PC-3 (cell line): ENCODE measurements at regions of chr15 and their contacts with region 1.

Region 1: DNA sequence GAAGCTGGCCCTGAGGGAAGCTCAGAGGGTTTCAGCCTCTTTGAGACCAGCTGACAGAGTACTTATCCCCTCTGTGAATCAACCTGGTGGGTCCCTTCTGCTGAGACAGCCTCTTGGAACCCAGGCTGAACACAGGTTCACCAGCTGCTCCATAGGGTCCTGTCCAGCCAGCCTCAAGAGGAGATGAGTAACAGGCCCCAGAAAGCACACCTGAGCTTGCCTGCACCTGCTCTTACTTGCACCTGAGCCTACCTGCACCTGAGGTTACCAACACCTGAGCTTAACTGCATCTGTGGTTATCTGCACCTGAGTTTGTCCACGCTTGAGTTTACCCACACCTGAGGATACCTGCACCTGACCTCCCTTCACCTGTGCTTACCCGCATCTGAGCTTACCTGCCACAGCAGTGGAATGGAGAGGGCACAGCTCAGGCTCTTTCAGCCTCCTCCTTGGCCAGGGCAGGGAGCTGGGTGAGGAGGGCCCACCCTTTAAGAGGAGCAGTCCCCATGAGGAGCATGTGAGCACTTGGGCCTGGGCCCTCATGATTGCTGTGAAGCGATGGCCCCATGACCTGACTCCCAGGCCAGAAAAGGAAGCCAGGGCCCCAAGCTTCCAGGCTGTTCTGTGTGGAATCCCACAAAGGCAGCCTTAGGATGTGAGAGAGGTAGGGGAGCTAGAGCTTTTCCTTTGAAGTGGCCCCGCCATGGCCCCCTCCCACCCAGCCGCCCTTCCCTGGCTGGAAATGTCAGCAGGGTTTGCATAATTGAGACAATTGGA is at the start of gene TRPM1:
- DNase-seq: no peak
- ATAC-seq: no peak
- H3K4me3 ChIP-seq: no peak within 1 kb of the TSS
- H3K27ac ChIP-seq: no peak within 1 kb of the TSS
- H3K4me1 ChIP-seq: peaks cover 6% of the 10 kb centered on the region
- H3K27me3 ChIP-seq: peaks cover 20% of the 10 kb centered on the region
- CTCF ChIP-seq: no peak
- total RNA-seq, gene TRPM1: not detected in 2 replicates

Region 2: DNA sequence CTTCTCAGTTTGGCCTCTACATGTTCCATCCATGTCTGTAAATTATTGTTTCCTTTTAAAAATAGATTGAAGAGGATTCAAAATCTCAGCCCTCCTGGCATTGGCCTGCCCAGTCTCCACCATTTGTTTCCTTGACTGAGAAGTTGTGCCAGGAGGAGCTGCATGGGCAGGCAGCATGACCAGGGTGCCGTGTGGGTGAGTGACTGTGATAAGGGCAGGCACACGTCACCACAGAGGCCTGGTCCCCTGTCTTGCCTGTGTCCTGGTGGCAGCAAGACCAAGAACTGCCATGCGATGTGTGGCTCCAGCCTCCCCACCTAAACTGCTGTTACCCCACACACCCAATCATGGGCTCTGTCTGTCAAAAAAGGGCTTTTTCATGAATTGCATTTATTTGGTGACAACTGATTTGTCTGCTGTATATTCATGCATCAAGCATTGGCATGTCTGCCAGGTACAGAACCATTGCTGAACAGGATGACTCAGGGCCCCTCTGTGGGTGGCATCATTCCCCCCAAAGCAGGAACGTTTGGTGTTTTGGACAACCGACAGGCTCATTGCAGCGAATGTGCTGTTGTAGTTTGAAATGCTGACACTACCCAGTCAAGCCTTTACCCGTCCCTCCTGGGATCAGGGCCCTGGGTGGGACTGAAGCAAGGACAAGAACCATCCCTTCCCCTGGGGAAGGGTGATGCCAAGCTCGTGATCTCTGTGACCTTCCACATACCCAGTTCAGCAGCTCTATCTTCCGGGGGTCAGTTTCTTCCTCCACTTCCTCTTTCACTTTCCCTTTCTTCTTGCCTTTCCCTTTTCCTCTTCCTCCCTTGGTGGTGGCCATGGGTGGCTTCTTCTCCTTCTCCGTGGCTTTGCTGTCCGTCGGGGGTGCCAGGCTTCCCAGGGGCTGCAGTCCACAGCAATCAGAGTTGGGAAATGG is 51.5 kb before region 1 on chr15:
- CTCF ChIA-PET with region 1: no interaction called
- POLR2A ChIA-PET with region 1: no interaction called
- intact Hi-C with region 1: loop called (anchors 10 kb)
- DNase-seq: no peak
- ATAC-seq: no peak
- H3K4me3 ChIP-seq: no peak overlapping the region
- H3K27ac ChIP-seq: no peak overlapping the region
- H3K4me1 ChIP-seq: no peaks in the 10 kb centered on the region
- H3K27me3 ChIP-seq: peaks cover 48% of the 10 kb centered on the region
- CTCF ChIP-seq: no peak